Tibial artery (tissue), 4 donors: ENCODE measurements at regions of chr9 and their contacts with region 1.

Region 1: DNA sequence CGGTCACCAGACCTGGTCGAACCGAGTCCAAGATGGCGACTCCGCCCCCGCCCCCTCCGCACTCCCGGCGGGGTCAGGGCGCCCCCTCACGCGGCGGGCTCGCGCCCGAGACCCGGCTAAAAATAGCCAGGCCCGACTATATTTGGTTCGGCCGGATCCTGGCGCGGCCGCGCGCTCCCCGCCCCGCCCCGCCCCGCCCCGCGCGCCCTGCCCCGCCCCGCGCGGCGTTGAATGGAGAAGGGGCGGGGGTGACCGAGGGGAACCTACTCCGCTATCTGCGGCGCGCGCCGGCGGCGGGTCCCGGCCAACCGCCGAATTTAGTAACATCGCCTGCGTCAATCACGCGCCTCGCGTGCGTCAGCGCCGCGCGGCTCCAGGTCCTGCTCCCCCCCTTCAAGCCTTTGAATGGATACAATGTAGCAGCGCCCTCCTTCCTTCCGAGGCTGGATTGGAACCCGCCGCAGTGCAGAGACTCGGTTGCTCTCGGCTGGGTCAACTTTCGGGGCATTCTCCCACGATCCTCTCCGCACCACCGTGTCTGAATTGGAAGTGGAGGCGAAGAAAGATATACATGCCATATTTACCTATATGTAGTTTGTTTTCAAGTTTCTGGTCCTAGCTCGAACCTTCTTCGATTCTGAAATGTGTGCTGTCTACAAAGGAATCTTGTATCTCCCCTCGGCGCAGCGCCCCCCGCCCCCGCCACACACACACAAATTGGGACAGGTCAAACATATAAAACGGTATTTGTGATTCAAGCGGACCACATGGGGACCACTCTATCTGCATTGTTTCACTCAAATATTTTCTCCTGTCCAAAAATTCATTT is 1.6 kb upstream of the NR4A3 start:
- DNase-seq: peak; percentile 94 to 98
- H3K4me3 ChIP-seq: peak overlapping the region; percentile 87 to 91
- H3K27ac ChIP-seq: peak overlapping the region; percentile 99
- H3K4me1 ChIP-seq: peaks cover 0 to 31% (median 14%) of the 10 kb centered on the region in 4 donors
- H3K27me3 ChIP-seq: no peaks in the 10 kb centered on the region
- CTCF ChIP-seq: no peak

Region 2: DNA sequence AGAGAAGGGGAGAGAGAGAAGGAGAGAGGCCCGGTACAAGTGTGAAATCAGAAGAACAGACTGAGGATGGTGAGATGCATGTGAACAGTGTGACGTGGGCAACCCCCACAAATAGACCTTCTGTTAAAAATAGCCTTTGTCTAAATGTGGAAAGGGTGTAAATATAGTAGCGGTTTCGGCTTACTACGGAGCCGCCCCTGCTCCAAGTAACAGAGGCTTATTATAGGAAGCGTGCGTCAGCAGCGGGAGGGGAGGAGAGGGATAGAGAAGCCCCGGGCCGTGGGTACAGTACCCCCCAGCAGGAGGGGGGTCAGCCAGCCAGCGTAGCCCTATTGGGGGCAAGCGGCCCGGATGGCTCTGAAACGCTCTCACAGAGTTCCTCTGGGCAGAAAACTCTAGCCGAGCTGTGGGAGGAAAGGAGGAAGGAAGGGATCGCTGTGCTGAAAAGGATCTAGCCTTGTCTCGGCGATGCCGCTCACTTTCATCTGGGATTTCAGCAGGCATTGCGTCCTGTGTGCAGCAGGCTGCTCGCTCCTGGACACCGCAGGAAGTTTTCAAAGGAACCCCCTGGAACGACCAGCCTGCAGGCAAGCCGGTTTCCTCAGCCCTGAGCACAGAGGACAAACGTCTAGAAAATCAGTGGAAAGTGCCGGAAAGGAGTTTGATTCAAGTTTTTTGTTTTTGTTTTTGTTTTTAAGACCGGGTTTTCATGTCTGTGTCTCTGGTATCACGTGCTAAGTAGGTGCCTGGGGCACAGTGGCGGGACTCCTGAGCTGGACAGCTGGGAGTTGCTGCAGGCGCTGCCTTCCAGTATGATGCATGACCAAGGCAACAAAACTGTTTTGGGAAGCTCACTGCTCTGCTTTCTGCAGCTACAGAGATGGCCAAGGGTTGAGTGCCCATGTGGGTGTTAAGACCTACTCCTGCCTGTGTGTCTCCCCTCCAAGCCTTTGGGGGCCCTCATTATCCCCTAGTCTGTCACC is 451.4 kb before region 1 on chr9:
- intact Hi-C with region 1: loop called (anchors 10 kb)
- DNase-seq: peak; percentile 60 to 84
- H3K4me3 ChIP-seq: peak overlapping the region; percentile 48 to 52
- H3K27ac ChIP-seq: peak overlapping the region; percentile 73 to 82
- H3K4me1 ChIP-seq: peaks cover 0 to 37% (median 14%) of the 10 kb centered on the region in 4 donors
- H3K27me3 ChIP-seq: no peaks in the 10 kb centered on the region
- CTCF ChIP-seq: no peak

Region 3: DNA sequence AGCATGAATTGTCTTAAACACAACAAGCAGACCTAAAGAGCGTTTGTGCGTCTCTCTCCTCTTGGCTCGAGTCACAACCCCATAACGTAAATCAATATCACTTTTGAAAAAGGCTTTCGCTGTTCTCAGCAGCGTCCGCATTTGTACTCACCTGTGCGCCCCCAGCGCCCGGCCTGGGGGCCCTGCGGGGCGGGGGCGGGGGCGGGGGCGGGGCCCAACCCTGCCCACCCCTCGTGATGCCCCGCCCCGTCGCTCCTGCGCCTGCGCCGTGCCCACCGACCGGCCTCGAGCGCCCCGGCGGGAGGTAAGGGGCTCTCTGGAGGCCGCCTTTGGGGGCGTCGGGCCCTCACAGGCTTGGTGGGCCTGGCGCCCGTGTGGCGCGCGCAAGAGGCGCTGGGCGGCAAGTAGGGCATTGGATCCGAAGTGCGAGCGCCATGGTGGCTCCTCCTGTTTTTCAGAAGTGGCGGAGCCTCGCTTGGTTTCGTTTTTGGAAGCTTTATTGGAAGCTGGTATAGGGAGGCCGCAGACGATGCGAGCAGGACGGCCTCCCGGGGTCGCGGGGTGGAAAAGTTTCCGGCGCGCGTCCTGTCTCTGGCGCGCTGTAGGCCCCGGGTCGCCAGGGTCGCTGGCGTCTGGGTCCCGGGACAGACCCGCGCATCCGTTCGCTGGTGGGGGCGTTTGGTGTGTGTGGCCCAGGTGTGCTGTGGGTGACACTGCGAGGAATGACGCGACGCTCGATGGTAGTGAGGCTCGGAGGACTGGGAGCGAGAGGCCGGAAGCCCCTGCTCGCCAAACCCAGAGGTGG is 86.5 kb after region 1 on chr9 and contains the start of gene STX17:
- intact Hi-C with region 1: loop called (anchors 10 kb)
- DNase-seq: peak; percentile 61 to 84
- H3K4me3 ChIP-seq: peak within 1 kb of the TSS; percentile 67 to 86
- H3K27ac ChIP-seq: peak within 1 kb of the TSS; percentile 89 to 94
- H3K4me1 ChIP-seq: peaks cover 0 to 16% (median 4%) of the 10 kb centered on the region in 4 donors
- H3K27me3 ChIP-seq: no peaks in the 10 kb centered on the region
- CTCF ChIP-seq: no peak

Region 4: GRCh38 chr9:100099722-100100042 is 279.6 kb after region 1 on chr9:
- intact Hi-C with region 1: loop called (anchors 5 kb)
- DNase-seq: peak in 1 of 2 donors; percentile 27
- H3K4me3 ChIP-seq: peak overlapping the region; percentile 76 to 89
- H3K27ac ChIP-seq: peak overlapping the region; percentile 87 to 88
- H3K4me1 ChIP-seq: peaks cover 0 to 38% (median 13%) of the 10 kb centered on the region in 4 donors
- H3K27me3 ChIP-seq: no peaks in the 10 kb centered on the region
- CTCF ChIP-seq: no peak

Region 5: DNA sequence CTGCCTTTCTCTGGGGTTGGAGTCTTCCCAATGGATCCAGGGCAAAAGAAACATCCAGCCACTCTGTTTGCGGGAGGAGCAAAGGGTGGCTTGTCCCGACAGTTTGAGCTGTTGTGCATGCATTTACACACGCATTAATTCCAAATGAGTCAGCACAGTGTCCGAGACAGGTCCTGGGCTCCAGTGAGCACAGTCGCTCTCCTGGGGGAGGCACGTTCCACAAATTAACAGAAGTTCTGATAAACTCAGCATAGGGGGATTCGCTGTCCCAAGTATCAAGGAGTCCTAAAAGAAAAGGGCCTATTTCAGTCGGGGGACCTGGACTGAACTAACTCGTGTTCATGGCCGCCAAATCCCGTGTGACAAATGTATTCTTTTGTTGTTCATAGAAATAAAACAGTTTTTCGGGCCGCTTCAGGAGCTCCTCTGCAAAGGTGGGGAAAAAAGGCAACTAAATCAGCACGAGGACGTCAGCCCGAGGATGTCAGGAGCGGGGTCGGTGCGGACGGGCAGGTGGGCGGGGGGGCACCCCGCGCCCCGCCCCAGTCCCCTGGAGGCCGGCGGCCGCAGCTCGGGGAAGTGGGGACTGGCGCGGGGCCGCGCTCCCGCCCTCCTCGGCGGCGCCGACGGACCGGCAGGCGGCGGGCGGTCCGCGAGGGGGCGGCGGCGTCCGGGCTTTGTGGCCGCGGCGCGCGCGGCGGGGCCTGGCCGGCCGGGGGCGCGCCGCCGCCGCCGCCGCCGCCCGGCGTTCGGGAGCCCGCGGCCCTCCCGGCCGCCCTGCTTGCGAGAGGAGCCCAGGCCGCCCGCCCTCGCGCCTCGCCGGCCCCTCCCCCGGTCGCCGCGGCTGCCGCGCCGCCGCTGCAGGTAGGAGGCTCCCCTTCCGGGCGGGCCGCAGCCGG is 606.7 kb after region 1 on chr9 and contains the start of gene MSANTD3:
- intact Hi-C with region 1: loop called (anchors 5 kb)
- DNase-seq: peak; percentile 35 to 81
- H3K4me3 ChIP-seq: peak within 1 kb of the TSS; percentile 65
- H3K27ac ChIP-seq: peak within 1 kb of the TSS; percentile 84 to 88
- H3K4me1 ChIP-seq: peaks cover 0 to 38% (median 19%) of the 10 kb centered on the region in 4 donors
- H3K27me3 ChIP-seq: peaks cover 0 to 3% of the 10 kb centered on the region in 2 donors
- CTCF ChIP-seq: peak; percentile 20 to 49